GM12878 (cell line): ENCODE measurements at regions of chr17 and their contacts with region 1.

Region 1: GRCh38 chr17:59521204-59522126 is 43.9 kb upstream of the DHX40 start:
- DNase-seq: peak; percentile 19
- ATAC-seq: peak; percentile 91
- H3K4me3 ChIP-seq: no peak overlapping the region
- H3K27ac ChIP-seq: no peak overlapping the region
- H3K4me1 ChIP-seq: no peaks in the 10 kb centered on the region
- H3K27me3 ChIP-seq: peaks cover 0 to 2% of the 10 kb centered on the region in 2 experiments; a peak in 1 of 4 replicates
- CTCF ChIP-seq: peak; percentile 83 to 94 (median 90)
- EP300 ChIP-seq: no peak
- POLR2A ChIP-seq: no peak
- RAD21 ChIP-seq: peak; percentile 84

Region 2: DNA sequence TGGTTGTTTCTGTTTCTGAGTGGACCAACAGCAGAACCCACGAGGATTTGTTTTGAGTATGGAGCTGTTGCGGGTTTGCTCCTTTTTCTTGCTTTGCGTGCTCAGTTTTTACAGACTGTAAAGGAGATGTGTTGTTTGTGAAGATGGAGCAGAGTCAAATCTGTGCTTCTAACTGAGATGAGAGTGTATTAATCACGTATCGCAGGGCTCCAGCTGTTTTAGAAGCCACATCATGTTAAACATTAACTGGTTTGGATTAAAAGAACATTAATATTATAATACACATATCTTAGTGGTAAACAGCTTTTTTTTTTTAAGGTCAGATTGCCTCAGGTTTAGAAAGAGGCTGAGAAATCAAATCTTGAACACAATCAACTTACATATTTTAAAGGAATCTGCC is 120.6 kb before region 1 on chr17:
- CTCF ChIA-PET with region 1: no interaction called
- POLR2A ChIA-PET with region 1: no interaction called
- RAD21 ChIA-PET with region 1: no interaction called
- SMC1A ChIA-PET with region 1: no interaction called
- in situ Hi-C with region 1: no loop called
- intact Hi-C with region 1: no loop called
- DNase-seq: no peak
- ATAC-seq: no peak
- H3K4me3 ChIP-seq: no peak overlapping the region
- H3K27ac ChIP-seq: no peak overlapping the region
- H3K4me1 ChIP-seq: no peaks in the 10 kb centered on the region
- H3K27me3 ChIP-seq: no peaks in the 10 kb centered on the region
- CTCF ChIP-seq: no peak
- EP300 ChIP-seq: no peak
- POLR2A ChIP-seq: no peak
- RAD21 ChIP-seq: no peak

Region 3: DNA sequence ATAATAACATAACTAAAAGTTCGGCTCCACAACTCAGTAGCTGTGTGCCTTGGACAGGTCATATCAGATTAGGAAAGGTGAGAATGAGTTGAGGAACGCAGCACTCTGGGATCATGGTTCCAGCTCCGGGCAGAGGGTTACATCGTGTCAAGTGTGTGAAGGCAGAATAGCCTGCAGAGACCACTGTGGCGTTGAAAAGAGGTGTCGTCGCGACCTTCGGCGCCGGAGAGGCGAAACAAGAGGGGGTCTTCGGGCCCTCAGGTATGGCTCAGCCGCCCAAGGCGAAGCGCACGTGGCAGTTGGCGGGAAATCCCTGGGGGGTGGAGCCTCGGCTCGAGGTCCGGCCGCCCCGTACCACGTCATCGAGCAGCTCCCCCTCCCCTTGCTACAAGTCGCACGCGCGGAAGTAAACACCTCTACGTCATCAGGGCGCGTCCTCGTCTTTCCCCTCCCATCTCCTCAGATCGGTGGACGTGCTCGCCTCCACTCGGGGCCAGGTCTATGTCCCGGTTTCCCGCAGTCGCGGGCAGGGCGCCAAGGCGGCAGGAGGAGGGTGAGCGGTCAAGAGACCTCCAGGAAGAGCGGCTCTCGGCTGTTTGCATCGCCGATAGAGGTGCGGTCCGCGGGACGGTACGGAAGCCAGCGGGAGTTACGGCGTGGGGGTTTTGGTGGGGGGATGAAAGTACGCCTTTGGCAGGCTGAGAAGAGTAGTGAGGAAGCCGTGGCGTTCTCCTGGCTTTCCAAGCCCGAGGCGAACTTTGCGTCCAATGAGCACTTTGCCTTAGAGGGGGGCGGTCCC is 43.9 kb after region 1 on chr17 and contains the start of gene DHX40:
- CTCF ChIA-PET with region 1: interaction called, 18 read pairs
- POLR2A ChIA-PET with region 1: no interaction called
- RAD21 ChIA-PET with region 1: interaction called, 3 read pairs
- SMC1A ChIA-PET with region 1: interaction called, 7 read pairs
- in situ Hi-C with region 1: no loop called
- intact Hi-C with region 1: no loop called
- DNase-seq: peak; percentile 68
- ATAC-seq: peak; percentile 92
- H3K4me3 ChIP-seq: peak within 1 kb of the TSS; percentile 99
- H3K27ac ChIP-seq: peak within 1 kb of the TSS; percentile 69
- H3K4me1 ChIP-seq: peaks cover 3% of the 10 kb centered on the region
- H3K27me3 ChIP-seq: no peaks in the 10 kb centered on the region
- CTCF ChIP-seq: no peak
- EP300 ChIP-seq: peak in 1 of 2 experiments; percentile 39; a peak in 1 of 4 replicates
- POLR2A ChIP-seq: peak; percentile 91
- RAD21 ChIP-seq: no peak
- polyA plus RNA-seq, gene DHX40: 4.8 to 5.6 TPM

Region 4: DNA sequence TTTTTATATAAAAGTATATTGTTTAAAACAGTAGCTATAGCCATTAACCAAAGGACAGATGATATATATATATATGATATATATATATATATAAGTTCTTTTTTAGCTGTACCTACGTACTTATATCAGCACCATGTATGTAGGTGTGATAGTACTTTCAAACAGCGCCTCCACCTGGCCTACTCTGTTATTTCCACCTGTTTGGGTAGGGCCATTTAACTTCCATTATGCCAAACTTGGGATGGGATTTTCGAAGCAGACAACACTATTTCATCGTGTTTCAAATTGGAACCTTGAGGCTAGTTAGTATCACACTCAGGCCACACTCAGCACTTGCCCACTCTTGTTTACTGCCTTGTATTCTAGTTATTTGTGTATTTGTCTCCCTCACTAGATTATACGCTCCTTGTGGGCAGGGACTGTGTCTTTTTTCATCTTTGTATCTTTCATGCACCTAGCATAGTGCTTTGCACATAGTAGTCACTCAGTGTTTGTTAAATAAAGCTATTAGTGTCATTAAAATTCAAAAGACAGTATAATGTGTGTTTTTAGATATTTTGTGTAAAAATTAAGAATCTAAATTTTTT is 86.4 kb after region 1 on chr17:
- CTCF ChIA-PET with region 1: interaction called, 24 read pairs
- POLR2A ChIA-PET with region 1: no interaction called
- RAD21 ChIA-PET with region 1: interaction called, 3 read pairs
- SMC1A ChIA-PET with region 1: interaction called, 8 read pairs
- in situ Hi-C with region 1: no loop called
- intact Hi-C with region 1: no loop called
- DNase-seq: no peak
- ATAC-seq: 0 out of 3 replicates have a peak, but pooled peaks have one; percentile 37
- H3K4me3 ChIP-seq: no peak overlapping the region
- H3K27ac ChIP-seq: no peak overlapping the region
- H3K4me1 ChIP-seq: no peaks in the 10 kb centered on the region
- H3K27me3 ChIP-seq: no peaks in the 10 kb centered on the region
- CTCF ChIP-seq: peak; percentile 12 to 22 (median 14); a peak in 3 of 6 replicates
- EP300 ChIP-seq: no peak
- POLR2A ChIP-seq: no peak
- RAD21 ChIP-seq: 0 out of 2 replicates have a peak, but pooled peaks have one; percentile 15

Region 5: GRCh38 chr17:59641799-59642489 is 120.5 kb after region 1 on chr17:
- CTCF ChIA-PET with region 1: interaction called, 10 read pairs
- POLR2A ChIA-PET with region 1: no interaction called
- RAD21 ChIA-PET with region 1: interaction called, 3 read pairs
- SMC1A ChIA-PET with region 1: no interaction called
- in situ Hi-C with region 1: no loop called
- intact Hi-C with region 1: no loop called
- DNase-seq: peak; percentile 63
- ATAC-seq: peak; percentile 93
- H3K4me3 ChIP-seq: 0 out of 2 replicates have a peak overlapping the region, but pooled peaks have one; percentile 18
- H3K27ac ChIP-seq: 0 out of 2 replicates have a peak overlapping the region, but pooled peaks have one; percentile 28
- H3K4me1 ChIP-seq: peaks cover 22% of the 10 kb centered on the region
- H3K27me3 ChIP-seq: no peaks in the 10 kb centered on the region
- CTCF ChIP-seq: no peak
- EP300 ChIP-seq: peak; percentile 53 to 68; a peak in 3 of 4 replicates
- POLR2A ChIP-seq: no peak
- RAD21 ChIP-seq: no peak

Region 6: DNA sequence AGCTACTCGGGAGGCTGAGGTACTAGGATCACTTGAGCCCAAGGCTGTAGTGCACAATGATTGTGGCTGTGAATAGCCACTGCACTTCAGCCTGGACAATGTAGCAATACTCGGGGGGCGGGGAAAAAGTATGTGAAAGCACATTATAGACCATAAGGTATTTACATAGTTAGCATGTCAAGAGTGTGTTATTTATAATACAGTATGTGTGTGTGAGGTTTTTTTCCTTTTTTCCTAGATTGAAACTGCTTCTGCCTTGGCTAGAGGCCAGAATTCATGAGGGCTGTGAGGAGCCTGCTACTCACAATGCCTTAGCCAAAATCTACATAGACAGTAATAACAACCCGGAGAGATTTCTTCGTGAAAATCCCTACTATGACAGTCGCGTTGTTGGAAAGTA is 155.3 kb after region 1 on chr17:
- CTCF ChIA-PET with region 1: interaction called, 3 read pairs
- POLR2A ChIA-PET with region 1: no interaction called
- RAD21 ChIA-PET with region 1: no interaction called
- SMC1A ChIA-PET with region 1: interaction called, 3 read pairs
- in situ Hi-C with region 1: no loop called
- intact Hi-C with region 1: loop called (anchors 10 kb)
- DNase-seq: no peak
- ATAC-seq: no peak
- H3K4me3 ChIP-seq: no peak overlapping the region
- H3K27ac ChIP-seq: no peak overlapping the region
- H3K4me1 ChIP-seq: no peaks in the 10 kb centered on the region; the same call in 1 of the 2 replicates
- H3K27me3 ChIP-seq: no peaks in the 10 kb centered on the region
- CTCF ChIP-seq: no peak
- EP300 ChIP-seq: no peak
- POLR2A ChIP-seq: no peak
- RAD21 ChIP-seq: no peak